ENCODE measurements at regions of chr13 and their contacts with region 1.

Region 1: GRCh38 chr13:97221989-97222700 is at the start of gene MBNL2:
- DNase-seq: peak; percentile 90
- ATAC-seq: peak; percentile 95
- H3K4me3 ChIP-seq: peak within 1 kb of the TSS; percentile 69 to 97 (median 78)
- H3K4me3 Mint-ChIP-seq: peak within 1 kb of the TSS; percentile 94
- H3K27ac ChIP-seq: peak within 1 kb of the TSS; percentile 88 to 95
- H3K27ac Mint-ChIP-seq: peak within 1 kb of the TSS; percentile 93
- H3K4me1 ChIP-seq: peaks cover 40% of the 10 kb centered on the region in 2 donors
- H3K4me1 Mint-ChIP-seq: peaks cover 44% of the 10 kb centered on the region
- H3K27me3 ChIP-seq: no peaks in the 10 kb centered on the region
- H3K27me3 Mint-ChIP-seq: no peaks in the 10 kb centered on the region
- CTCF ChIP-seq: no peak
- total RNA-seq, gene MBNL2: 50.1 and 51.2 TPM in 2 replicates

Region 2: DNA sequence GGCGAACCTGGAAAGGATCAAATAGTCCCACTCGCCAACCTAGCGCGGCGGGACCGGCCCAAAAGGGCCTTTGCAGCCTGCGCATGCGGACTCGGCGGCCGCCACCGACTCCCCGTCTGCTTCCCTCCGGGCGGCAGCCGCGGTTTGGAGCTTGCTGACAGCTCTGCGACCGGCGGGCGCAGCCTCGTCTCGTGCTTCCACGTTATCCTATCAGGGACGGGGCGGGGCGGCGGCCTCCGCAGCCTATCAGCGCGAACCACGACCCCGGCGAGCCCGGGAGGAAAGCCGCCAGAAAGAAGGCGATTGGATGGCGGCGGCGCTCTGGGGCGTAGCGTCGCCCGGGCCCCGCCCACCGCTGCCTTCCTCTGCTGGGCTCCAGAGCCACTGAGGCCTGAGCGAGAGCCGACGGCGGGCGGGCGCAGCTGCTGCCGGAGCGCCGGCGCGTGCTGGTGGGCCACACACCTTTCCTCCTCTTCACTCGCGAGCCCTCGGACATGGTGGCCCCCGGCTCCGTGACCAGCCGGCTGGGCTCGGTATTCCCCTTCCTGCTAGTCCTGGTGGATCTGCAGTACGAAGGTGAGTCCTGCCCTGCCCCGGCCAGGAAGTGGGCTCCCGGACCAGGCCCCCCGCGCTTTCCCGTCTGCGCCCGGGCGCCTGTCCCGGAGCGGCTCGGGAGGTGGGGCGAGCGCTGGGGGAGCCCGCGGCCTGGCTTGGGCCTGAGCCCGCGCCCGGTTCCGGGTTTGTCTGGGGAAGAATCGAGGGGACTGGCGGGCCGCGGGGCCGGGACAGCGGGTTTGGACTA is 1545.2 kb before region 1 on chr13 and contains the start of gene DNAJC3:
- CTCF ChIA-PET with region 1: no interaction called
- POLR2A ChIA-PET with region 1: no interaction called
- intact Hi-C with region 1: loop called (anchors 5 kb)
- DNase-seq: peak; percentile 99
- ATAC-seq: peak; percentile 95
- H3K4me3 ChIP-seq: peak within 1 kb of the TSS; percentile 72 to 98 (median 89)
- H3K4me3 Mint-ChIP-seq: peak within 1 kb of the TSS; percentile 95
- H3K27ac ChIP-seq: peak within 1 kb of the TSS; percentile 79 to 91
- H3K27ac Mint-ChIP-seq: peak within 1 kb of the TSS; percentile 94
- H3K4me1 ChIP-seq: peaks cover 22 to 27% of the 10 kb centered on the region in 2 donors
- H3K4me1 Mint-ChIP-seq: peaks cover 48% of the 10 kb centered on the region
- H3K27me3 ChIP-seq: no peaks in the 10 kb centered on the region
- H3K27me3 Mint-ChIP-seq: no peaks in the 10 kb centered on the region
- CTCF ChIP-seq: no peak
- total RNA-seq, gene DNAJC3: 12.1 and 13.0 TPM in 2 replicates

Region 3: DNA sequence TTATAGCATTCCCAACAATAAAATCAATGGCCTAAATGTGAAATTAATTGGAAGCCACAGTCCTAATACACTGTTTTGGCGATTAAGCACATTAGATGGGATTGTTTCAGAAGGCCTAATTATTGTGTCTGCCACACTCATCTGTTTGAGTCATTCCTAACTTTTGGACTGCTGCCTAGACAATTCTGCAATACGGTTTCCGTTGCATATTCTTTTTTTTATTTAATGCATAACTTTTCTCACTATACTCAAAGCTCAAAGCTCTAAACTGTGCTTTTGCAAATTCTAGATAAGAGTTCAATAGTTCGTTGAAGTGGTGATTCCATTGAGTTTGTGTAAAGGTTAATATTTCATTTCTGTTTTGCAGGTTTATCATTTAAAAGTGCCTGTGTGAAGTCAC is 53.1 kb after region 1 on chr13:
- CTCF ChIA-PET with region 1: no interaction called
- POLR2A ChIA-PET with region 1: no interaction called
- intact Hi-C with region 1: loop called (anchors 10 kb)
- DNase-seq: no peak
- ATAC-seq: no peak
- H3K4me3 ChIP-seq: no peak overlapping the region
- H3K4me3 Mint-ChIP-seq: no peak overlapping the region
- H3K27ac ChIP-seq: no peak overlapping the region
- H3K27ac Mint-ChIP-seq: no peak overlapping the region
- H3K4me1 ChIP-seq: peaks cover 8 to 15% of the 10 kb centered on the region in 2 donors
- H3K4me1 Mint-ChIP-seq: peaks cover 66% of the 10 kb centered on the region
- H3K27me3 ChIP-seq: no peaks in the 10 kb centered on the region
- H3K27me3 Mint-ChIP-seq: no peaks in the 10 kb centered on the region
- CTCF ChIP-seq: no peak

Region 4: GRCh38 chr13:97344265-97345175 is 122.4 kb after region 1 on chr13:
- CTCF ChIA-PET with region 1: interaction called, 5 read pairs
- POLR2A ChIA-PET with region 1: no interaction called
- intact Hi-C with region 1: loop called (anchors 10 kb)
- DNase-seq: peak; percentile 32
- ATAC-seq: no peak
- H3K4me3 ChIP-seq: no peak overlapping the region
- H3K4me3 Mint-ChIP-seq: no peak overlapping the region
- H3K27ac ChIP-seq: no peak overlapping the region
- H3K27ac Mint-ChIP-seq: no peak overlapping the region
- H3K4me1 ChIP-seq: no peaks in the 10 kb centered on the region
- H3K4me1 Mint-ChIP-seq: no peaks in the 10 kb centered on the region
- H3K27me3 ChIP-seq: no peaks in the 10 kb centered on the region
- H3K27me3 Mint-ChIP-seq: no peaks in the 10 kb centered on the region
- CTCF ChIP-seq: peak; percentile 52

Region 5: DNA sequence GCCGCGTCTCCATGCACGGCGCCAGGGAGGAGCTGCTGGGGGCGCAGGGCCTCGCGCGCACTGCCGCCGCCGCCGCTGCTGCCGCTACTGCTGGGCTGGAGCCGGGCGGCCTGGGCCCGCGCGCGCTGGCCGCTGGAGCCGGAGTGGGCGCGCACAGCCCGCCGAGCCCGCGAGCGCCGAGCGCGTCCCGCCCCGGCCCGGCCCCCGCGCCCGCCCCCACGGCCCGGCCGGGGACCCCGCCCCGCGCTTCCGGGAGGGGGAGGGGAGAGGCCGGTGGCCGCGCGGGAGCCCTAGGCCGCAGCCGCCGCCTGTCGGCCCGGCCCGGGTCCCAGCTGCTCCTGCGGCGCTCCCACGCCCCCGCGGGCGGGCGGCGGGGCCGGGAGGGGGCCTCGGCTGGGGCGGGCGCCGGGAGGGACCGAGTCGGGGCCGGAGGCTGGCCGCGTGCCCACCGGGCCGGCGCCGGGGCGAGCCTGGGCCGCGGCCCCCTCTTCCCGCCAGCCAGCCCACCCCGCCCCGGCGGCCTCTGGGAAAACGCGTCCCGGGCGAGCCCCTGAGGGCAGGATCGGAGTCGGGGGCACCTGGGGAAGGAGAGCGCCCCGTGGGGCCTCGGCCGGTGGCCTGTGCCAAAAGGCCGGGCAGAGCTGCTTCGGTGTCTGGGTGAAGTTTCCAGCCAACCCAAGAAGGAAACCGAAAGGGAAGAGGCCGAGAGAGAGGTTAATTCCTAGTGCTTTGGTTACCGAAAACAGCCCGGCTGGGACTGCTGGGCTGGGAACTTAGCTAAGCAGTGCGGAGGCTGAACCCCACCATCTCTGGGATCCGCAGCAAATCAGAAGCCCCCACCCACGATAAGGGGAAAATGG is 1355.0 kb after region 1 on chr13 and contains the start of gene STK24:
- CTCF ChIA-PET with region 1: no interaction called
- POLR2A ChIA-PET with region 1: no interaction called
- intact Hi-C with region 1: loop called (anchors 10 kb)
- DNase-seq: peak; percentile 80
- ATAC-seq: peak; percentile 83
- H3K4me3 ChIP-seq: peak within 1 kb of the TSS; percentile 51 to 88 (median 72)
- H3K4me3 Mint-ChIP-seq: peak within 1 kb of the TSS; percentile 95
- H3K27ac ChIP-seq: peak within 1 kb of the TSS; percentile 67 to 87
- H3K27ac Mint-ChIP-seq: peak within 1 kb of the TSS; percentile 95
- H3K4me1 ChIP-seq: peaks cover 38 to 39% of the 10 kb centered on the region in 2 donors
- H3K4me1 Mint-ChIP-seq: peaks cover 37% of the 10 kb centered on the region
- H3K27me3 ChIP-seq: no peaks in the 10 kb centered on the region
- H3K27me3 Mint-ChIP-seq: no peaks in the 10 kb centered on the region
- CTCF ChIP-seq: no peak
- total RNA-seq, gene STK24: 117 and 120 TPM in 2 replicates

Measured in B cell (primary cell).